ENCODE measurements at regions of chr7 and their contacts with region 1.

Region 1: DNA sequence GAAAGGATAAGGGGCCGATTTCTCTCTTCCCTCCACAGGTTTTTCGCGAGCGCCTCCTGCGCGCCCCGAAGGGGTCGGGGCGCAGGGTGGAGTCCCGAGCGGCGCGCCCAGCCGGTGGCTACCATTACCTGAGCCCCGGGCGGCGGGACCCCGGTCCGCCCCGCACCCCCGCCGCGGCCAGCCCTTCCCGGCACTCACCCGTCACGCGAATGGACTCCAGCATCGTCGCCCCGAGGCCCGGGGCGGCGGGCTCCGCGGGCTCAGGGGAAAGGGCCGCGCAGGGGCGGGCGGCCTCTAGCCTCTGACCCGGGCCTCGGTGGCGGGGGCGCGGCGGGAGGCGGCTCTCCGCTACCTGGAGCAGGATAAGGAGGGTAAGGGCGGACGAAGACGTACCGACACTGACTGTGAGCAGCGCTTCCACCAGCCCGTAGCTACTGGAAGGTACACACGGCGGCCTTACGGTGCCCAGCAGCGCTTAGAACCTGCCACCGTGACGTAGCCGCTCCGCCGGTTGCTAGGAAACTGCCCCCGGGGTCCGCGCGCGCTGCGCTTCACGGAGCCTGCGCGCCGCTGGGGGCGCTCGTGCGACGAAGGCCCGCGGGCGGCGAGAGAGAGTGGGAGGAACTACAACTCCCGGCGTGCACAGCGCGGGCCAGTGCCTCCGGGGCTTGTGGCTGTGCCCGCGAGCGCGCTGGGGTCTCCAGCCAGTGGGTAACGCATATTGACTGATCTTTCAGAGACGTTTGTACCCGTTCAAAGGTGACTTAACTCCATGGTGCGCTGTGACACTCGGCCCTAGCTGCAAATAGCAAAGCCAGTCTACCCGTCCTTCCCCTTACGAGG is 22.7 kb upstream of the ANLN start:
- DNase-seq: peak; percentile 54 to 74
- ATAC-seq: peak; percentile 96 to 97
- H3K4me3 ChIP-seq: peak overlapping the region; percentile 54 to 84 (median 71)
- H3K27ac ChIP-seq: peak overlapping the region; percentile 35 to 64 (median 44)
- H3K4me1 ChIP-seq: peaks cover 0 to 4% of the 10 kb centered on the region in 2 donors
- H3K27me3 ChIP-seq: no peaks in the 10 kb centered on the region
- CTCF ChIP-seq: peak; percentile 84 to 93 (median 89)
- POLR2A ChIP-seq: no peak

Region 2: DNA sequence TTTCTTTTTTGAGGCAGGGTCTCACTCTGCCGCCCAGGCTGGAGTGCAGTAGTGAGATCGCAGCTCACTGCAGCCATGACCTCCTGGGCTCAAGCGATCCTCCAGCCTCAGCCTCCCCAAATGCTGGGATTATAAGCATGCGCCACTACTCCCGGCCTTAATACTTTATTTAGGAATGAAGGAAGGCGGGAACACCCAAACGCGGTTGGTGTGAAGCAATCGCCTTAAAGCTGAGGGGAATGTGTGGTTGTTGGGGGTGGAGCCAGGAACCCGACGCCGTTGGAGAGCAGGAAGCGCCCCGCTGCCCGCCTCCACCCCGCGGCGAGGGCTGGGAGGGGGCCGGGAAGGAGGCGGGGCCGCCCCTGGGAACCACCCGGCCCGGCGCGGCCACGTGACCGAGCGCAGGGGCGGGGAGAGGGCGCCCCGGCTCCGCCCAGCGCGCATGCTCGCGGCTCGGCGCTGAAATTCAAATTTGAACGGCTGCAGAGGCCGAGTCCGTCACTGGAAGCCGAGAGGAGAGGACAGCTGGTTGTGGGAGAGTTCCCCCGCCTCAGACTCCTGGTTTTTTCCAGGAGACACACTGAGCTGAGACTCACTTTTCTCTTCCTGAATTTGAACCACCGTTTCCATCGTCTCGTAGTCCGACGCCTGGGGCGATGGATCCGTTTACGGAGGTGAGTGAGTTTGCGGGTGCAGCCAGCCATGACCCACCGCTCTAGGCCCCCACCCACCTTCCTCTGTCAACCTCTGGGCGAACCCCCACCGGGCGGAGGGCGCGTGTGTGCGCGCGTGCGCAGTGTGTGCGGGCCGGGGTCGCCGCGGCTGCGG is 22.6 kb after region 1 on chr7 and contains the start of gene ANLN:
- in situ Hi-C with region 1: no loop called
- intact Hi-C with region 1: loop called (anchors 1 kb)
- DNase-seq: peak; percentile 79 to 89
- ATAC-seq: peak; percentile 88 to 93
- H3K4me3 ChIP-seq: peak within 1 kb of the TSS; percentile 58 to 77 (median 65)
- H3K27ac ChIP-seq: peak within 1 kb of the TSS; percentile 66 to 82 (median 69)
- H3K4me1 ChIP-seq: peaks cover 14 to 19% of the 10 kb centered on the region in 2 donors
- H3K27me3 ChIP-seq: no peaks in the 10 kb centered on the region
- CTCF ChIP-seq: no peak
- POLR2A ChIP-seq: peak in 1 of 2 donors; percentile 9
- total RNA-seq, gene ANLN: 0.73 to 1.8 (median 1.3) TPM